GM18951 (cell line): ENCODE measurements at regions of chr2 and their contacts with region 1.

Region 1: GRCh38 chr2:207473049-207473930 is 56.5 kb upstream of the CREB1 start:
- POLR2A ChIP-seq: no peak

Region 2: GRCh38 chr2:206693399-206694137 is 779.7 kb before region 1 on chr2:
- in situ Hi-C with region 1: loop called (anchors 10 kb)
- POLR2A ChIP-seq: no peak

Region 3: DNA sequence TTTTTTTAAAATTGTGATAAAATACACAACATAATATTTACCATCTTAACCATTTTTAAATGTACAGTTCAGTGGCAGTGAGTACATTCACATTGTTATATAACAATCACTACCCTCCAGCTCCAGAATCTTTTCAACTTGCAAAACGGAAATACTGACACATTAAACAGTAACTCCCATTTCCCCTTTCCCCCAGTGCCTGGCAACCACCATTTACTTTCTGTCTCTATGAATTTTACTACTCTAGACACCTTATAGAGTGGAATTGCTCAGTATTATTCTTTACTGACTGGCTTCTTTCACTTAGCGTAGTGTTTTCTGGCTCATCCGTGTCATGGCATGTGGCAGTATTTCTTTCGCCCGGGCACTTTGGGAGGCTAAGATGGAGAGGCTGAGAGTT is 675.3 kb before region 1 on chr2:
- in situ Hi-C with region 1: loop called (anchors 10 kb)
- POLR2A ChIP-seq: no peak

Region 4: DNA sequence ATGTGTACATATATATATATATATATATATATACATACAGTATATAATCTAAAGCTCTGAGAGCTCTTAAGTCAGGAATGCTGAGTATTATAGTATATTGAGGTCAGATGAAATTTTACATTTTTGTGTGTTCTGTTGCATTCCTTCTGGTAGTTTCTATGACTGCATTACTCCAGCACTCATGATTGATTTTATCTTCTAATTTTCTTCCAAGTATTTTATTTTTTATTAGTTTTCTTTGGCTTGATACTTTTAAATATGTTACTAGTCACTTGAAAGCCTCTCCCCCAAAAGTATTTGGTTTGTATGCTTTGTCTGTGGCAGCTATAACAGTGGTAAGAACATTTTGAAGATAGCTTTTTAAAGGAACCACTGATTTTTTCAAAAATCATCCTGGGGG is 126.9 kb after region 1 on chr2:
- in situ Hi-C with region 1: no loop called
- POLR2A ChIP-seq: no peak